Left ventricle myocardium superior (tissue), 1 donor: ENCODE measurements at regions of chr17 and their contacts with region 1.

Region 1: GRCh38 chr17:73189417-73190099 is 3.3 kb upstream of the COG1 start:
- DNase-seq: no peak
- ATAC-seq: no peak

Region 2: GRCh38 chr17:72725433-72726068 is 464.0 kb before region 1 on chr17:
- intact Hi-C with region 1: loop called (anchors 10 kb)
- DNase-seq: peak; percentile 62
- ATAC-seq: peak; percentile 79